ENCODE measurements at regions of chr12 and their contacts with region 1.

Region 1: GRCh38 chr12:57904848-57905811 is 36.2 kb upstream of the ATP23 start:
- DNase-seq: peak; percentile 81
- CTCF ChIP-seq: peak; percentile 100

Region 2: DNA sequence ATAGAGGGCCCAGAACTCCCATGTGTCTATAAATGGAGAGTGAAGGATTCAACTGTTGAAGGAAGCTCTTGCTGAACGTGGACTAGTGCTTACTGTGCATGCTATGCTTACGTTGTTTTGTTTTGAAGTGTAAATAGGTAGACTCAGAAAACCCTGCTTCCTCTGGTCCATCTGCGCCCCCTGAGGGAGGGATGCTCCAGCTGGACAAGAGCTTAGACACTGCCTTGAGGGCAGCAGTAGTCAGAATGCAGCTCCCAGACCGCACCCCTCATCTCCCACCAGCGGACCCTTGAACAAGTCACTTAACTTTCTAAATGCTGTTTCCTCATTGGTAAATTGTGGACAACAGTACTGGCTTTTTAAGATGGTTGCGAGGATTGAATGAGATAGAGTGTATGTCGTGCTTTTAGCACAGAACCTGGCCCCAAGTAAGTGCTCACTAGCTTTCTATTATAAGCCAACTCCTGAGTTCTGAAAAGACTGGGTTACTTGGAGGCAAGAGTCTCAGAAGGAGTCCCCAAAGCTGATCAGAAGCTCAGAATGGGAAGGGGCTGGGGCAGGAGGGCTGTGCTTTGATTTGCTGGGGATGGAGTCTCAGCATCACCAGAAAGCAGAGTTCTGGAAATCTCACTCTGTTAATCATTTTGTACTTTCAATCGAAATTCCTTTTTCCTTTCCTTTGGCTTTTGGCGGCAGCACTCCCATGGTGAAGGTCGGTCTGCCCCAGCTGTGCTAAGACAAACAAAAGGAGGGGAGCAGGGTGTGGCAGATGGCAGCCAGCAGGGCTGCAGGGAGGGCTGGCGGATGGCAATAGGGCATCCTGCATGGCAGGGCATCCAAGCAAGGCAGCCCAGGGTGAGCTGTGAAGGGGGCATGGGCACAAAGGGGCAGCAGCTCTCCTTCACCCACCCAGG is 182.2 kb before region 1 on chr12:
- CTCF ChIA-PET with region 1: no interaction called
- POLR2A ChIA-PET with region 1: no interaction called
- DNase-seq: peak; percentile 13
- CTCF ChIP-seq: no peak

Region 3: GRCh38 chr12:57754411-57755193 is 150.5 kb before region 1 on chr12 and contains the start of gene MARCHF9:
- CTCF ChIA-PET with region 1: interaction called, 12 read pairs
- POLR2A ChIA-PET with region 1: no interaction called
- DNase-seq: peak; percentile 86
- CTCF ChIP-seq: no peak

Region 4: DNA sequence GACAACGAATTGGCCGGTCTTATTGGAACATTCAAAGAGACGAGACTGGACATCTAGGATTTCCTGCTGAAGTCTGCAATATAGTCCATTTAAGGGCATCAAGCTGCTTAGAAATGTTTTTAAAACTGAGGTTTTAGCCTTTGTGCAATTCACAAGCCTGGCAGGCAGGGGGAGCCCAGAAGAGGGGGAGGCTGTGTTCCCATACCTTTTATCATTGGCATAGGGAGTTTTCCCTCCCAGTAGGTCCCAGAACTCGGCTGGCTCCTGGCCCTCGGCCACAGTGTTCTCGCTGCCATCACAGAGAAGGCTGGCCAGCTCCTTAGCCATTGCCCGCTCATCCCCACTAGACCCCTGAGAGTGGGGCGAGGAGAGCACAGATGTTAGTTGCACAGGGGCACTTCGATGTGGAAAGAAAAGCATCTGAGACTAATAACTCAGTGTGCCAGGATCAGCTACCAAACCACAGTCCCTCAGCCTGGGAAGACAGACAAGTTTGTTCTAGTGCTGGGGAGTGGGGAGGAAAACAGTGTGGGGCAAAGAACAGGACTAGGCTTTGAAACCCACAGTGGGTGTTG is 101.7 kb before region 1 on chr12:
- CTCF ChIA-PET with region 1: interaction called, 87 read pairs
- POLR2A ChIA-PET with region 1: no interaction called
- DNase-seq: peak; percentile 42
- CTCF ChIP-seq: peak; percentile 64

Region 5: GRCh38 chr12:57829025-57829777 is 75.9 kb before region 1 on chr12:
- CTCF ChIA-PET with region 1: interaction called, 279 read pairs
- POLR2A ChIA-PET with region 1: no interaction called
- DNase-seq: no peak
- CTCF ChIP-seq: no peak

Region 6: DNA sequence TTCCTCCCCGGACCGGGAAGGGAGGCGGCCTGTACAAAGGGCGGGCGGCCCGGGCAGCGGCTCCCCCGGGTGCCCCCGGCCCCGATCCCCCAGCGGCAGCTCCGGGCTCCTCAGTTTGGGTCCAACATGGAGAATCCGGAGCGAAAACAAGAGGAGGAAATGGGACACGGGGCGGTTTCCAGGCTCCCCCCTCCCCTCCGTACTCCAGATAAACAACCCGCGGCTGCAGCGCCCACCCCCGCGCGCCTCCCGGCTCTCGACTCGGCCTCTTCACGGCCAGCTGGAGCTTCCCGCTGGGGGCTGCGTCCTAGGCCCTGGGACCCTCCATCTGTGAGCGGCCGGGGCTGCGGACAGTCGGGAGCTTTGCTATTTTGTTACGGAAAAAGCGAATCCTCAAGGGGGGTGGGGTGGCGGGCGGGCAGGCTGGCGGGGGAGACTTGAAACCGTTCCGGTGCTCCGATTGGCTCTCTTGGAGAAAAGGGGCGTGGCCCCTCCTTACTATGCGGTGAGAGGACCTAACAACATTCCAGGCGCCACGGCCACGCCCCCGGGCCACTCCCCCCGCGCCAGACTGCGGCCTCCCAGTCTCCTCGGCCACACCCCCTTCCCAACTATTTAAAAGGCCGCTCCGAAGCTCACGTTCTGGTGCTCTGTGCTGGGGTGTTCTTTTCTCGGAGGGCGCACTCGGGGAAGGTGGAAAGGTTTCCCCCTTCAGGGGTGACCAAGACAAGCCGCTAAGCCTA is 58.4 kb before region 1 on chr12 and contains the start of gene CTDSP2:
- CTCF ChIA-PET with region 1: interaction called, 279 read pairs
- POLR2A ChIA-PET with region 1: no interaction called
- DNase-seq: peak; percentile 97
- CTCF ChIP-seq: no peak

Region 7: GRCh38 chr12:57918147-57918546 is 13.0 kb after region 1 on chr12:
- CTCF ChIA-PET with region 1: interaction called, 15 read pairs
- POLR2A ChIA-PET with region 1: no interaction called
- DNase-seq: no peak
- CTCF ChIP-seq: no peak

Measured in GM10248 (cell line).